Right cardiac atrium (tissue), 5 donors: ENCODE measurements at regions of chr13 and their contacts with region 1.

Region 1: GRCh38 chr13:27826379-27827353 is 34.4 kb downstream of the GSX1 start:
- DNase-seq: peak; percentile 73 to 90 (median 86)
- ATAC-seq: peak; percentile 92 to 95
- H3K4me3 ChIP-seq: no peak overlapping the region
- H3K27ac ChIP-seq: no peak overlapping the region
- H3K4me1 ChIP-seq: no peaks in the 10 kb centered on the region
- H3K27me3 ChIP-seq: peaks cover 2% of the 10 kb centered on the region

Region 2: GRCh38 chr13:27076421-27076820 is 750.2 kb before region 1 on chr13:
- intact Hi-C with region 1: no loop called
- DNase-seq: no peak
- ATAC-seq: no peak
- H3K4me3 ChIP-seq: no peak overlapping the region
- H3K27ac ChIP-seq: no peak overlapping the region
- H3K4me1 ChIP-seq: peaks cover 3% of the 10 kb centered on the region
- H3K27me3 ChIP-seq: no peaks in the 10 kb centered on the region

Region 3: GRCh38 chr13:27374650-27375049 is 452.0 kb before region 1 on chr13:
- intact Hi-C with region 1: loop called in 3 of 4 experiments (anchors 5 kb)
- DNase-seq: peak; percentile 68 to 75 (median 71)
- ATAC-seq: peak; percentile 95 to 97
- H3K4me3 ChIP-seq: no peak overlapping the region
- H3K27ac ChIP-seq: no peak overlapping the region
- H3K4me1 ChIP-seq: no peaks in the 10 kb centered on the region
- H3K27me3 ChIP-seq: no peaks in the 10 kb centered on the region

Region 4: DNA sequence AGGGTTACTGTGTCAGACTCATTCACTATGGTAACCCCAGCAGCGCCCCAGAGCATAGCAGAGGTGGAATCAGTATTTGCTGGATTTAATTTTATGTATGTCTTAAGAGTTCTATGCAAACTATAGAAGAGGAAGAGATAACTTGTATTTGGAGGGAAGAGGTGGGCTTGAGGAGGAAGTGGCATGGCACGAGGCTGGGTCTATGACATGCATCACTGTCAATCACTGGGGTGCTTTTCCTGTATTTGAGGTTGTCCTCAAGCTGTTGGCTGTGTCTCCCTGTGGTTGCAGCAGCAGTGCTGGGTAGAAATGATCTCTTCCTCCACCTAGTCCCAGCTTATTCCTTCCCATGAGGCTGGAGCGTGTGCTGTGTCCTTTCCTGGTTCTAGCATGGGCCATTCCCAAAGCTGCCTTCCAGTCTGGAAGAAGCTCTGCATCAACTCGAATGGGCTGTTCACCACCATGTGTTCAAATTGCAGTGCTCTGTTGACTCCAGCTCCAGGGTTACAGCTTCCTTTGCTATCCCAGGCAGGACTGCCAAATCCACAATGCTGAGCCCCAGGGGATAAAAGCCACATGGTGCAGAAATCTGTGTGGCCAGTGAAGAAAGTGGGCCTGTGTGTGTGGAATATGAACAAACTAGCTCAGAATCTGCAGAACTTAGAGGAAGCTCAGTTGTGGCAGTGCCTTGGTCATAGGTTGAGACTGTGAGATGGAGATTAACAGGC is 303.2 kb before region 1 on chr13:
- intact Hi-C with region 1: loop called in 1 of 4 experiments (anchors 10 kb)
- DNase-seq: no peak
- ATAC-seq: peak in 1 of 2 donors; percentile 52
- H3K4me3 ChIP-seq: no peak overlapping the region
- H3K27ac ChIP-seq: no peak overlapping the region
- H3K4me1 ChIP-seq: no peaks in the 10 kb centered on the region
- H3K27me3 ChIP-seq: no peaks in the 10 kb centered on the region

Region 5: GRCh38 chr13:27533155-27533643 is 293.5 kb before region 1 on chr13:
- intact Hi-C with region 1: loop called (anchors 5 to 10 kb)
- DNase-seq: peak; percentile 86 to 96 (median 93)
- ATAC-seq: peak; percentile 96 to 97
- H3K4me3 ChIP-seq: peak overlapping the region; percentile 8
- H3K27ac ChIP-seq: no peak overlapping the region
- H3K4me1 ChIP-seq: no peaks in the 10 kb centered on the region
- H3K27me3 ChIP-seq: no peaks in the 10 kb centered on the region

Region 6: DNA sequence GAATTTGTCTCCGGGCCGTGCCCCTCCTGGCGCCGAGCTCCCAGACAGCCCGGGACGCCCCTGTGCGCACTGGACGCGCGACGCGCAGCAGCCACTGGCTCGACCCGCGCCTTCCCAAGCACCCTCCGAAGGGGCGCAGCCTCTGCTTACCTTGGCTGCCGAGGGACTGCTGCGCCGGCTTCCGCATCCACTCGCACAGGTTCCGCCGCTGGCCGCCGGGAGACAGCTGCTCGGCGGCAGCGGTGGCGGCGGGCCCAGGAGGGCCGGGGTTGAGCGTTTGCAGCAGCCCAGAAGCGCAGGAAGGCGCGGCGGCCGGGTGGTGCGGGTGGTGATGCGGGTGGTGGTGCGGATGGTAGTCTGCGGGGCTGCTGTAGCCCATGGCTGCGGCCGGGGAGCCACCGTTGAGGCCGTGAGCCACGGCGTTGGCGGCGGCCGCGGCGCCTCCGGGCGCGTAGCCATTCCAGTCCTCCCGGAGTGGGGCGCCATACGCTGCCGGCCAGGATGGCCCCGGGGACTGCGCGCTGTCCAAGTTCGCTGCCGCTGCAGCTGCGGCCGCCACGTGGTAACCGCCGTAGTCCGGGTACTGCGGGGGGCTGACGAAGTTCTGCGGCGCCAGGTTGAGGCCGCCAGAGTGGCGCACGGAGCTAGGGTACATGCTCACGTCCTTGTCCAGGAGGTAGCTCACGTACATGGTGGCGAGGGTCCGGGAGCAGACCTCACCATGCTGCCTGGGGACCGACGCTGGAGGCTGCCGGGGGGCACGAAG is 141.8 kb after region 1 on chr13:
- intact Hi-C with region 1: no loop called
- DNase-seq: no peak
- ATAC-seq: no peak
- H3K4me3 ChIP-seq: no peak overlapping the region
- H3K27ac ChIP-seq: no peak overlapping the region
- H3K4me1 ChIP-seq: peaks cover 4% of the 10 kb centered on the region
- H3K27me3 ChIP-seq: no peaks in the 10 kb centered on the region

Region 7: GRCh38 chr13:27980280-27980998 is 153.8 kb after region 1 on chr13:
- intact Hi-C with region 1: loop called (anchors 2 to 10 kb)
- DNase-seq: no peak
- ATAC-seq: peak in 1 of 2 donors; percentile 12
- H3K4me3 ChIP-seq: no peak overlapping the region
- H3K27ac ChIP-seq: no peak overlapping the region
- H3K4me1 ChIP-seq: no peaks in the 10 kb centered on the region
- H3K27me3 ChIP-seq: peaks cover 12% of the 10 kb centered on the region

Region 8: DNA sequence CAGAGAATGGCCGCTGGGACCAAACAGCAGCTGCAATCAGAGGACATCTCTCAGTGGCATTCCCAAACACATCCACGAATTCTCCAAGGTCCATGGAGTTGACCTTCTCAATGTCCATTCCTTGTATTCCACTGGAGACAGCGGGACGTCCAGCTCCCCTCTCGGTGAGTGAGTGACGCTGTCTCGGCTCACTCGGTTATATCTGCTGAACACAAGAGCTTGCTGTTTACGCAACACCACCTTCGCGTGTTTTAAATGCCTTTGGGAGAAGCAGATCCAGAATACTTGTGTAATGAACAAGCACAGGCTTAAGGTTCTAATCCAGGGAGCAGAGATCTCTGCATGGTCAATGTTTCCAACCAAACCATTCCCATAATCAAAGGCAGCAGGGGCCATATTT is 161.9 kb after region 1 on chr13 and contains the start of gene URAD:
- intact Hi-C with region 1: loop called (anchors 2 to 10 kb)
- DNase-seq: no peak
- ATAC-seq: no peak
- H3K4me3 ChIP-seq: no peak within 1 kb of the TSS
- H3K27ac ChIP-seq: no peak within 1 kb of the TSS
- H3K4me1 ChIP-seq: no peaks in the 10 kb centered on the region
- H3K27me3 ChIP-seq: peaks cover 2% of the 10 kb centered on the region
- total RNA-seq, gene URAD: not detected